ENCODE measurements at regions of chr1 and their contacts with region 1.

Region 1: DNA sequence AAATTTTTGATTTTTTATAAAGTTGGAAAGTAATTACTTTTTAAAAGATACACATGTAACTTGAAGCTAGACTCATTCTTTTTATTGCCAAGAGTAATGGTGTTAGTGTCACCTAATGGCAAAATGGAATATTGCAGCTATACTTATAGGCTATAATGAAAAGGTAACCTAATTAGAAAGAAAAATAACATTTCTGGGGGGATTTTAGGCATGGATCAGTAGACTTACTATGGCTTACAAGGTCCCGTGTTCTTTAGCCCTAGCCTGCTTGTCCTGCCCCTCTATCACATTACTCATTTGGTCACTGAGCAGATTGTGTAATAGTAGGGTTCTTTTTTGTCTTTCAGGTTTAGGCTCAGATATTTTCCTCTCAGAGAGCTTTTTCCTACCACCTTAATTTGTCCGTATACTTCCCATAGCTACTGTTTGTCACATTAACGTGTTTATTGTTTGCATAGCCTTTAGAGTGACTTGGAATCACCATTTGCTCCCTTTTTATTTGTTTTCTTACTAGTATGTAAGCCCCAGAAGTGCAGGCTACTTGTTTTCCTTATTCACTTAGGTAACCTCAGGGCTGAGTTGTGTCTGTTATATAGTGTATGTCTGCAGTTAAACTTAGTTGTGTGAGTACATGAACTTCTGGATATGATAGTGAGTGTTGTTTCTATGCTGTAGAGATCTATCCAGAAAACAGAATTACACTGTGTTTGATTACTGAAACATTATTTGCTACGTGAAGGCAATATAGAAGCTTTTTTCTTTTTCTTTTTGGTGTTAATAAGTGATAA is 58.7 kb downstream of the RABGAP1L start:
- DNase-seq: no peak
- ATAC-seq: peak; percentile 69

Region 2: DNA sequence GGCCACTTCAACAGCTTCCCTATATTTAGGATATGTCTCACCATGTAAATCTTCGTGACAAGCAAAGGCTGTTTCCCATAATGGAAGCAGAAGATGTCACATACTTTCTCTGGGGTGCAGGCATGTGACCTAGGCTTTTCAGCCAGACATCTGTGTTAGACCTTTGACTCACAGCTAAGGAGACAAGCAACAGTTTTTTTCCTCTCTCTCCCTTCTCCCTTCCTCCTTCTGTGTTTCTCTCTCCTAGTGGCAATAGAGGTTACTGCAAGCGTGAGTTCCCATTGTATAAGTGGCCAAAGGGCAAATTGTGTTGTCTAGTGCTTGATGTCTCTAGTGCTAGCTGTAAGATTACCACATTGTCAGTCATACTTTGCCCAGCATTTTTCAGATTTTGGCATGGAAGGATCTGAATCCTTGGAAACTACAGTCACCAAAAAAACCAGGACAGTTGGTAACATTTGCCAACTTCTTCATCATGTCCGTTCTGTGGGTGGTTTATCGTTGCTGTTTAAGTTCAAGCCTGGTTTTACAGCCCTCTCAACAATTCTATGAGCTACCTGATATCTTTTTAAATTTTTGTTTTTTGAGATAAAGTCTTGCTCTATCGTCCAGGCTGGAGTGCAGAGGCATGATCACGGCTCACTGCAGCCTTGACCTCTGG is 103.1 kb before region 1 on chr1:
- intact Hi-C with region 1: loop called (anchors 10 kb)
- DNase-seq: no peak
- ATAC-seq: peak; percentile 53